ENCODE measurements at regions of chr19 and their contacts with region 1.

Region 1: GRCh38 chr19:2648528-2648937 is 54.0 kb downstream of the GNG7 start:
- DNase-seq: peak; percentile 56 to 78 (median 71)
- ATAC-seq: peak; percentile 95
- H3K4me3 ChIP-seq: no peak overlapping the region
- H3K4me3 Mint-ChIP-seq: no peak overlapping the region
- H3K27ac ChIP-seq: no peak overlapping the region
- H3K27ac Mint-ChIP-seq: no peak overlapping the region
- H3K4me1 ChIP-seq: no peaks in the 10 kb centered on the region
- H3K4me1 Mint-ChIP-seq: peaks cover 0 to 2% (median 0%) of the 10 kb centered on the region in 7 donors
- H3K27me3 ChIP-seq: no peaks in the 10 kb centered on the region
- H3K27me3 Mint-ChIP-seq: peaks cover 0 to 2% (median 0%) of the 10 kb centered on the region in 5 donors

Region 2: GRCh38 chr19:2750808-2751443 is 102.4 kb after region 1 on chr19:
- CTCF ChIA-PET with region 1: interaction called, 44 read pairs
- POLR2A ChIA-PET with region 1: interaction called, 3 read pairs
- intact Hi-C with region 1: loop called in 1 of 2 experiments (anchors 1 kb)
- DNase-seq: no peak
- ATAC-seq: no peak
- H3K4me3 ChIP-seq: no peak overlapping the region
- H3K4me3 Mint-ChIP-seq: no peak overlapping the region
- H3K27ac ChIP-seq: no peak overlapping the region
- H3K27ac Mint-ChIP-seq: no peak overlapping the region
- H3K4me1 ChIP-seq: peaks cover 0 to 3% of the 10 kb centered on the region in 2 donors
- H3K4me1 Mint-ChIP-seq: no peaks in the 10 kb centered on the region
- H3K27me3 ChIP-seq: no peaks in the 10 kb centered on the region
- H3K27me3 Mint-ChIP-seq: peaks cover 0 to 2% (median 0%) of the 10 kb centered on the region in 5 donors

Region 3: GRCh38 chr19:2867025-2867991 is 218.8 kb after region 1 on chr19 and contains the start of gene ZNF556:
- CTCF ChIA-PET with region 1: interaction called, 10 read pairs
- POLR2A ChIA-PET with region 1: no interaction called
- intact Hi-C with region 1: loop called in 1 of 2 experiments (anchors 1 kb)
- DNase-seq: no peak
- ATAC-seq: no peak
- H3K4me3 ChIP-seq: no peak within 1 kb of the TSS
- H3K4me3 Mint-ChIP-seq: no peak within 1 kb of the TSS
- H3K27ac ChIP-seq: no peak within 1 kb of the TSS
- H3K27ac Mint-ChIP-seq: no peak within 1 kb of the TSS
- H3K4me1 ChIP-seq: no peaks in the 10 kb centered on the region
- H3K4me1 Mint-ChIP-seq: peaks cover 0 to 14% (median 9%) of the 10 kb centered on the region in 7 donors
- H3K27me3 ChIP-seq: no peaks in the 10 kb centered on the region
- H3K27me3 Mint-ChIP-seq: peaks cover 0 to 6% (median 4%) of the 10 kb centered on the region in 5 donors
- total RNA-seq, gene ZNF556: not detected